PC-3 (cell line): ENCODE measurements at regions of chr1 and their contacts with region 1.

Region 1: GRCh38 chr1:216523449-216524190 is 100.4 kb upstream of the USH2A start:
- DNase-seq: peak; percentile 40
- ATAC-seq: peak; percentile 69
- H3K4me3 ChIP-seq: no peak overlapping the region
- H3K27ac ChIP-seq: no peak overlapping the region
- H3K4me1 ChIP-seq: peaks cover 6% of the 10 kb centered on the region; the same call in 1 of the 2 replicates
- H3K27me3 ChIP-seq: 0 out of 2 replicates have a peak, but pooled peaks cover 4% of the 10 kb centered on the region
- CTCF ChIP-seq: no peak

Region 2: GRCh38 chr1:216502528-216503162 is 21.0 kb before region 1 on chr1:
- CTCF ChIA-PET with region 1: interaction called, 4 read pairs
- POLR2A ChIA-PET with region 1: no interaction called
- intact Hi-C with region 1: loop called (anchors 2 kb)
- DNase-seq: no peak
- ATAC-seq: no peak
- H3K4me3 ChIP-seq: no peak overlapping the region
- H3K27ac ChIP-seq: no peak overlapping the region
- H3K4me1 ChIP-seq: no peaks in the 10 kb centered on the region
- H3K27me3 ChIP-seq: peaks cover 8% of the 10 kb centered on the region; the same call in 1 of the 2 replicates
- CTCF ChIP-seq: no peak

Region 3: DNA sequence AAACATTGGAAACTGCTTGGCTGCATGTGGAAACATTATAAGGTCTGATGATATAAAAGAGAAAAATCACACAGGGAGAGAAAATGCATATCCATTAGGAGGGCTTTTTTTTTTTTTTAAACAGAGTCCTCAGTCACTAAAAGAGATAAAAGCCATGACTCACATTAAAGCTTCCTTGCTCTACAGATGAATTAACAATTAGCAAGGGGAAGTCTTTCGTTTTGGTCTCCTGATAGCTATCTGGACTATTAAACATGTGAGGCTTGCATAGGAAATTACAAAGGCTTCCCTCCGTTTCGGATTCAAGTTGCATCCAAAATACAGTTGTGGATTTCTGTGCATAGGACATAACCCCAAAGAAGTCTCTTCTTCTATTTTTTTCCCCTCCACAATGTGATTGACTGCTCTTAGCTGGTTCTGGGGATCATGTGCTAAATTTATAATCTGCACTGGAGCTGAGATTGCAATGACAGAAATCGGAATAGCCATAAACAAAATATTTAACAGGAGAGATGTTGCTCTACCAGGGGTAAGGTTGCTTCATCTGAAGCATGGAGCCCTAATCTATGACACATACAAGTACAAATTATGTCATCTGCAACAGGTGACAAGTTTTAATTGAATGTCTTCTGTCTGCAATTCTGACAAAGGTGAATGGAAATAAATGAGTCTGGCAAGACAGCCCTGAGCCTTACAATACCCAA is 52.8 kb after region 1 on chr1:
- CTCF ChIA-PET with region 1: no interaction called
- POLR2A ChIA-PET with region 1: no interaction called
- intact Hi-C with region 1: no loop called
- DNase-seq: no peak
- ATAC-seq: no peak
- H3K4me3 ChIP-seq: no peak overlapping the region
- H3K27ac ChIP-seq: no peak overlapping the region
- H3K4me1 ChIP-seq: no peaks in the 10 kb centered on the region
- H3K27me3 ChIP-seq: peaks cover 54% of the 10 kb centered on the region
- CTCF ChIP-seq: no peak

Region 4: DNA sequence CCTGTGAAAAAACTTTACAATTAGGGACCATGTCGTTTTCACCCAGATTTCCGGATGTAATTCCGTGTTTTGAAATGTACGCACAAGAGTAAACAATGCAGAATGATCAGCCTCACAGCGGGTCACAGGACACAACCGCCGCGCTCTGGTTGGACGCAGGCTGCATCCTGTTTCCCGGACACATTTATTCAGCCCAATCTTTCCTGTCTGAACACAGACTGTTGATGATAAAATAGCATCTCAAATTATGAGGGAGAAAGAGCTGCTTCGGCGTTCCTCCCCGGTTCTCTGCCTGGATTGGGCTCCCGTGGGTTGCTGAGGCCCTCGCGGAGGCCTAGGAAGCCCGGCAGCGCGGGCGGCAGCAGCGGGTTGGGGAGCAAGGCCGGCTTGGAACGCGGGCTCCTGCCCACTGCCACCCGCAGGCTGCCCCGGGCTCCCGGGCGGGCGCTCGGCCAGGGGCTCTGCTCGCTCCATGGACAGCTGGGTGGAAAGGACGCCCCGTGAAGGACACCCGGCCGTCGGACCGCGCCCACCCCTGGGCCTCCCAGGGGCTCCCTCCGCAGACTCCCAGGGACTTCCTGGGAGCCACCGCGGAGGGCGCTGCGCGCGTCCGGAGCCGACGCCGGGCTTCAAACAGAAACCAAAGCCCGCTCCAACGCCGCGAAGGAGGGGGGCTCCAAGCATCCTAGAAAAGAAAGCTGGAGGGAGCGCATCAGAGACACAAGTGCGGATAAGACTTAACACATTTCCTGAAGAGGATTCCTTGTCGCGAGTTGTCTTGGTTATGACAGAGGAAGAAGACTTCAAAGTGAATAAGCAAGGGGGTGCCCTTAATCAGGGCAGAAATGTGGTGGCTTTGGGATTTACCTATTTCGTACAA is 77.3 kb after region 1 on chr1:
- CTCF ChIA-PET with region 1: no interaction called
- POLR2A ChIA-PET with region 1: interaction called, 11 read pairs
- intact Hi-C with region 1: no loop called
- DNase-seq: peak; percentile 82
- ATAC-seq: peak; percentile 93
- H3K4me3 ChIP-seq: peak overlapping the region; percentile 77
- H3K27ac ChIP-seq: peak overlapping the region; percentile 20
- H3K4me1 ChIP-seq: 0 out of 2 replicates have a peak, but pooled peaks cover 4% of the 10 kb centered on the region
- H3K27me3 ChIP-seq: peaks cover 3% of the 10 kb centered on the region; the same call in 1 of the 2 replicates
- CTCF ChIP-seq: peak; percentile 85

Region 5: DNA sequence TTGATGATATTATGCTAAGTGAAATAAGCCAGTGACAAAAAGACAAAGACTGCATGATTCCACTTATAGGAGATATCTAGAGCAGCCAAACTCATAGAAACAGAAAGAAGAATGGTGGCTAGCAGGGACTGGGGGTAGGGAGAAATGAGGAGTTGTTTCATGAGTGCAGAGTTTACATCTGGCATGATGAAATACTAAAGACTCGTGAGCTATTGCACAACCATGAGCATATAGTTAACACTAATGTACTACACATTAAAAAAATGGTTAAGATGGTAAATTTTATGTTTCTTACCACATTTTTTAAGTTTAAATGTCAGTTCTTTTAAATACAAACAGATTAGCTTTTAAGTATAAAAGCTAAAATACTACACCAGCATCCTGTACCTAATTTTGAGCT is 141.8 kb after region 1 on chr1:
- CTCF ChIA-PET with region 1: no interaction called
- POLR2A ChIA-PET with region 1: no interaction called
- intact Hi-C with region 1: no loop called
- DNase-seq: no peak
- ATAC-seq: no peak
- H3K4me3 ChIP-seq: no peak overlapping the region
- H3K27ac ChIP-seq: no peak overlapping the region
- H3K4me1 ChIP-seq: no peaks in the 10 kb centered on the region
- H3K27me3 ChIP-seq: no peaks in the 10 kb centered on the region
- CTCF ChIP-seq: no peak